ENCODE measurements at regions of chr6 and their contacts with region 1.

Region 1: DNA sequence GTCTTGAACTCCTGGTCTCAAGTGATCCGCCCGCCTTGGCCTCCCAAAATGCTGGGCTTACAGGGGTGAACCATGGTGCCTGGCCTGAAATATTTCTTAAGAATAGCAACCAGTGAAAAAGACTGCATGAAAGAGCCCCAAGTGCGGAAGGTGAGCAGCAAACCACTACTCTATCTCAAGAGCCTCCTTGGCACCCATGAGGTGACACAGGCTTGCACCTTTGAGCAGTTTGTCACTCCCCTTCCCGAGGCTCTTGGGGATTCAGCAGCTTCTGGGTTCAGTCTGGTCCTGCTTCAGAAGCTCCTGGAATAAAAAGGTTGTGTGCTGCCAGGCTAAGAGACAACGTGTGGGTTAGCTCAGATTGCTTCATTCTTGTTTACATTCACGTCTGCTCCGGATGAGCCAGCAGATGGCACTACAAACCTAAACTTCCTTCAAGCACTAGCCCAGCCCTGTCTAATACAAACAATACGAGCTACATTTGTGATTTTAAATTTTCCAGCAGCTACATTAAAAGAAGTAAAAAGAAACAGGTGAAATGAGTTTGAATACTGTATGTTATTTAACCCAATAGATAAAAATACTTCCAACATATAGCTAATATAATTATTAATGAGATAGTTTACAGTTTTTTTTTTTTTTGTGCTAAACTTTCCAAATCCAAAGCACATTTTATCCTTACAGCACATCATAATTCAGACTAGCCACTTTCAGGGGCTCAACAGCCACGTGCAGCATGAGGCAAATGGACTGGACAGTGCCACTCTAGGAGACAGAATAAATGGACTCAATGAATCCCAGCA is 46.2 kb downstream of the GJA10 start:
- DNase-seq: peak; percentile 73
- H3K4me3 ChIP-seq: no peak overlapping the region
- H3K27ac ChIP-seq: no peak overlapping the region
- H3K4me1 ChIP-seq: no peaks in the 10 kb centered on the region
- H3K27me3 ChIP-seq: peaks cover 0 to 10% of the 10 kb centered on the region in 2 experiments
- CTCF ChIP-seq: peak; percentile 67
- POLR2A ChIP-seq: no peak

Region 2: GRCh38 chr6:89952686-89953085 is 12.3 kb after region 1 on chr6:
- CTCF ChIA-PET with region 1: interaction called, 28 read pairs
- POLR2A ChIA-PET with region 1: no interaction called
- dilution Hi-C with region 1: no loop called
- intact Hi-C with region 1: no loop called
- DNase-seq: no peak
- H3K4me3 ChIP-seq: no peak overlapping the region
- H3K27ac ChIP-seq: no peak overlapping the region
- H3K4me1 ChIP-seq: peaks cover 8% of the 10 kb centered on the region
- H3K27me3 ChIP-seq: no peaks in the 10 kb centered on the region
- CTCF ChIP-seq: no peak
- POLR2A ChIP-seq: no peak

Region 3: DNA sequence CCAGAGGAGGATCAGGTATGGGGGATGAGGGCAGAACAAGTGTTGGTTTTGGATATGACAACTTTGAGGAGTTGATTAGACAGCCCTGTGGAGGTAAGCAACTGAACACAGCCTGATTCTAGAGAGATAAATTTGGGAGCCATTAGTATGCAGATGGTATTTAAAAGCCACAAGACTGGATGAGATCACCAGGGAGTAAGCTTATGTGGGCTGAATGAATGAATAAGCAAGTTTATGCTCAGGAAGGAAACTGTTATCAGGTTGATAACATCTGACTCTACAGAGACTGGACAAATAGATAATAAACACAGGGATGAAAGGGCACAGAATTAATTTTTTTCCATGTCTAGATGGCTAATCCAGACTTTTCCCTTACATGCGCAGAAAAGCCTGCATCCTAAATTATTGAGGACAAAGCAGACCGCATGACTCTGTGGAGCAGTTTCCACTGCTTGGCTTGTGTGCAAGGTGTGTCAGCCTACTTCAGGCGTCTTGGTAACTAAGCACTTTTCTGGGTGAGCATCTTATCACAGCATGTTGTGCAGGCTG is 104.5 kb after region 1 on chr6:
- CTCF ChIA-PET with region 1: interaction called, 3 read pairs
- POLR2A ChIA-PET with region 1: no interaction called
- dilution Hi-C with region 1: no loop called
- intact Hi-C with region 1: loop called (anchors 5 kb)
- DNase-seq: peak; percentile 76
- H3K4me3 ChIP-seq: no peak overlapping the region
- H3K27ac ChIP-seq: peak overlapping the region; percentile 62
- H3K4me1 ChIP-seq: peaks cover 16% of the 10 kb centered on the region
- H3K27me3 ChIP-seq: no peaks in the 10 kb centered on the region
- CTCF ChIP-seq: no peak
- POLR2A ChIP-seq: no peak

Region 4: GRCh38 chr6:90285611-90286381 is 345.4 kb after region 1 on chr6:
- CTCF ChIA-PET with region 1: interaction called, 24 read pairs
- POLR2A ChIA-PET with region 1: no interaction called
- dilution Hi-C with region 1: no loop called
- intact Hi-C with region 1: no loop called
- DNase-seq: peak; percentile 90
- H3K4me3 ChIP-seq: peak overlapping the region in 1 of 3 experiments; percentile 64
- H3K27ac ChIP-seq: peak overlapping the region; percentile 99
- H3K4me1 ChIP-seq: peaks cover 22% of the 10 kb centered on the region
- H3K27me3 ChIP-seq: no peaks in the 10 kb centered on the region
- CTCF ChIP-seq: no peak
- POLR2A ChIP-seq: no peak

Region 5: DNA sequence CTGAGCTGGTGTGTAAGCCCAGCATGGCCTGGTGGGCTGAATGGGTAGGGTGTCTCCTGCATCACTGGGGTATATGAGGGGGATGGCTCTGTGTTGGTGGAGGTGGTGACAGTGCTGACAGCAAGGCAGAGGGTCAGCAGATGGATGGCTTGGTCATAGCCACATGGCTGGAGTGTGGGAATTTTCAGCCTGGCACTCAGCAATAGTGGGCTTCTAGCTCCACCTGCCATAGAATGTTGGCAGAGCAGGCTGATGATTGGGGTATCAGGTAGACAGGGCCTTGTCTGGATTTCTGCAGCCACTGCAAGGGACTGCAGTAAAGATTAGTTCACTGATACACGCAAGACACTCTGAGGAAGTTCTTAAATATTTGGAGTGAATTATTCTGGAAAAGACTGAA is 493.7 kb after region 1 on chr6:
- CTCF ChIA-PET with region 1: interaction called, 25 read pairs
- POLR2A ChIA-PET with region 1: no interaction called
- dilution Hi-C with region 1: no loop called
- intact Hi-C with region 1: no loop called
- DNase-seq: no peak
- H3K4me3 ChIP-seq: no peak overlapping the region
- H3K27ac ChIP-seq: no peak overlapping the region
- H3K4me1 ChIP-seq: no peaks in the 10 kb centered on the region
- H3K27me3 ChIP-seq: peaks cover 0 to 2% of the 10 kb centered on the region in 2 experiments
- CTCF ChIP-seq: no peak
- POLR2A ChIP-seq: no peak

Region 6: DNA sequence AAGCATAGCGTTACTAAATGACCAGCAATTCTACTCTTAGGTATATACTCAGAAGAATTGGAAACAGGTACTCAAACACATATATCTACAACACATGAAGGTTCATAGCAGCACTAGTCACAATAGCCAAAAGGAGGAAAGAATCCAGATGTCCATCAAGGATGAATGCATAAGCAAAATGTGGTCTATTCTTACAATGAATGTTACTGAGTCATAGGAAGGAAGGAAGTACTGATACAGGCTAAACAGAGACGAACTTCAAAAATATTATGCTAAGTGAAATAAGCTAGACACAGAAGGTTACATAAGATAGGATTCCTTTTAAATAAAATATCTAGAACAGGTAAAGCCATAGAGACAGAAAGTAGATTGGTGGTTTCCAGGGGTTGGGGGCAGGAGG is 552.9 kb after region 1 on chr6:
- CTCF ChIA-PET with region 1: interaction called, 19 read pairs
- POLR2A ChIA-PET with region 1: no interaction called
- dilution Hi-C with region 1: no loop called
- intact Hi-C with region 1: no loop called
- DNase-seq: peak; percentile 91
- H3K4me3 ChIP-seq: no peak overlapping the region
- H3K27ac ChIP-seq: peak overlapping the region; percentile 66
- H3K4me1 ChIP-seq: peaks cover 36% of the 10 kb centered on the region
- H3K27me3 ChIP-seq: no peaks in the 10 kb centered on the region
- CTCF ChIP-seq: no peak
- POLR2A ChIP-seq: peak; percentile 46

Measured in endothelial cell of umbilical vein (primary cell).